ENCODE measurements at regions of chr12 and their contacts with region 1.

Region 1: GRCh38 chr12:131894313-131894860 is at the start of gene ULK1:
- DNase-seq: peak; percentile 96
- ATAC-seq: peak; percentile 86
- H3K4me3 Mint-ChIP-seq: peak within 1 kb of the TSS; percentile 78
- H3K27ac Mint-ChIP-seq: peak within 1 kb of the TSS; percentile 55
- H3K4me1 Mint-ChIP-seq: peaks cover 12% of the 10 kb centered on the region
- H3K27me3 Mint-ChIP-seq: no peaks in the 10 kb centered on the region
- total RNA-seq, gene ULK1: 12.9 to 14.4 TPM

Region 2: GRCh38 chr12:131121705-131122405 is 772.5 kb before region 1 on chr12:
- CTCF ChIA-PET with region 1: no interaction called
- POLR2A ChIA-PET with region 1: no interaction called
- intact Hi-C with region 1: no loop called
- DNase-seq: no peak
- ATAC-seq: no peak
- H3K4me3 Mint-ChIP-seq: no peak overlapping the region
- H3K27ac Mint-ChIP-seq: no peak overlapping the region
- H3K4me1 Mint-ChIP-seq: no peaks in the 10 kb centered on the region
- H3K27me3 Mint-ChIP-seq: no peaks in the 10 kb centered on the region

Region 3: GRCh38 chr12:131684015-131684725 is 210.2 kb before region 1 on chr12:
- CTCF ChIA-PET with region 1: no interaction called
- POLR2A ChIA-PET with region 1: no interaction called
- intact Hi-C with region 1: loop called in 1 of 2 experiments (anchors 1 kb)
- DNase-seq: peak; percentile 25
- ATAC-seq: no peak
- H3K4me3 Mint-ChIP-seq: no peak overlapping the region
- H3K27ac Mint-ChIP-seq: no peak overlapping the region
- H3K4me1 Mint-ChIP-seq: peaks cover 14% of the 10 kb centered on the region
- H3K27me3 Mint-ChIP-seq: peaks cover 5% of the 10 kb centered on the region

Region 4: DNA sequence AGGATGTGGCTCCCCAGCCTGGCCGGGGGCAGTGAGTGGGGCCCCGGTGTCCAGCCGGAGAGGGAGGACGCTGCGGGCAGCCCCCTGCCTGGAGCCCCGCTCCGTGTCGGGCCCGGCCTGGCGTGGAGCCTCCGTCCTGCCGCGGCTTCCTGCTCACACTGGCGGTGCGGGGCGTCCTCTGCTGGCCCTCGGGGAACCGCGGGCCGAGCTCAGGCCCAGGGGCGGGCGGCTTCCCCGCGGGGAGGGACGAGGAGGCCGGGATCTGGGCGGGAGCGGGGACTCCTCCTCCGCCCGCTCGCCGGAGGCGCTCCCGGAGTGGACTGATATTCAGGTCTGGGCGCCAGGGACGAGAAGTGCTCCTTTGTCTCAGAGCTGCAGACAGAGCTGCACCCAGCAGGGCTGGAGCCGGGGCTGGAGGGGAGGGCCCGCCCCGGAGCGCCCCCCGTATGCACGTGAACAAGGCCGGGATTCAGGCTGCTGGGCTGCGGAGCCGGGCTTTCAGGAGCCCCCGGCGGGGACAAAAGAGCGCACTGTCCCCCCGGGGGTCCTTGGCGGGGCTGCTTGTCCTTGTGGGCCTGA is 64.0 kb before region 1 on chr12:
- CTCF ChIA-PET with region 1: no interaction called
- POLR2A ChIA-PET with region 1: no interaction called
- intact Hi-C with region 1: loop called in 1 of 2 experiments (anchors 2 kb)
- DNase-seq: peak; percentile 69
- ATAC-seq: peak; percentile 63
- H3K4me3 Mint-ChIP-seq: peak overlapping the region; percentile 12
- H3K27ac Mint-ChIP-seq: no peak overlapping the region
- H3K4me1 Mint-ChIP-seq: peaks cover 11% of the 10 kb centered on the region
- H3K27me3 Mint-ChIP-seq: peaks cover 39% of the 10 kb centered on the region

Region 5: GRCh38 chr12:131912518-131913294 is 18.3 kb after region 1 on chr12:
- CTCF ChIA-PET with region 1: no interaction called
- POLR2A ChIA-PET with region 1: no interaction called
- intact Hi-C with region 1: no loop called
- DNase-seq: no peak
- ATAC-seq: no peak
- H3K4me3 Mint-ChIP-seq: no peak overlapping the region
- H3K27ac Mint-ChIP-seq: no peak overlapping the region
- H3K4me1 Mint-ChIP-seq: no peaks in the 10 kb centered on the region
- H3K27me3 Mint-ChIP-seq: no peaks in the 10 kb centered on the region

Region 6: DNA sequence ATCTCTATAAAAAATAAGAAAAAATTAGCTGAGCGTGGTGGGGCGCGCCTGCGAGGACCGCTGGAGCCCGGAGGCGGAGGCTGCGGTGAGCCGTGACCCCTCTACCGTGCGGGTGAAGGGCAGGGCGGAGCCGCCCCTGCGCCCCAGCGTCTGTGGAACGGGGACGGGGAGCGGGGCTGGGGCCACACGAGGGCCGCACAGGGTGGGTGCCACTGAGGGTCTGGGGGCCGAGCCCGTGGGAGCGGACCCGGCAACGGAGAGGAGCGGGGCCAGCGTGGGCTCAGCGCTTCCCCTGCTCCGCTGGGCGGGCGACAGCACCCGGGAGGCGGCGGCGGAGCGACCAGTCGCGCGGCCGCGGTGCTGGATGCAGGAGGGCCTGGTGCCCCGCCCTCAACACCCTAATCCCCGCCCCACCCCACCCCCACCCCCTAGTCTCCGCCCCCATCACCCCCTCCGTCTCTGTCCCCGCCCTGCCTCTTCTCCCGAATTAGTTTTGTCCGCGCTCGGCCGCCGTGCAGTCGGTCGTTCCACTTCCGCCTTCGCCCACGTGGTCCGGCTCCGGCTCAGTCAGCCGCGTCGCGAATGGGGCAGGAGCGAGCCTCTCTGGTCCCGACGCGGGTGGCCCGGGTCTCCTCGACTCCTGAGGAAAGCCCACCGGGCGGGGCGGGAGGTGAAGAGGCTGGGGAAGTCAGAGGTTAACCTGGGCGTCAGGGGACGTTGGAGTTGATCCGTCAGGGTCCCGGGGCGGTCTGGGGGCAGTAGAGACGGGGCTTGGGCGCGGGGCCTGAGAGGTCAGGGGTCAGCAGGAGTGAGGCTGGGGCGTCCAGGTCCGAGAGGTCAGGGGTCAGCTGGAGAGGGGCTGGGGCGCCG is 34.6 kb after region 1 on chr12 and contains the start of gene PUS1:
- CTCF ChIA-PET with region 1: no interaction called
- POLR2A ChIA-PET with region 1: no interaction called
- intact Hi-C with region 1: loop called (anchors 1 kb)
- DNase-seq: peak; percentile 97
- ATAC-seq: peak; percentile 89
- H3K4me3 Mint-ChIP-seq: peak within 1 kb of the TSS; percentile 97
- H3K27ac Mint-ChIP-seq: peak within 1 kb of the TSS; percentile 85
- H3K4me1 Mint-ChIP-seq: peaks cover 25% of the 10 kb centered on the region
- H3K27me3 Mint-ChIP-seq: no peaks in the 10 kb centered on the region
- total RNA-seq, gene PUS1: 37.8 to 56.5 TPM

Region 7: DNA sequence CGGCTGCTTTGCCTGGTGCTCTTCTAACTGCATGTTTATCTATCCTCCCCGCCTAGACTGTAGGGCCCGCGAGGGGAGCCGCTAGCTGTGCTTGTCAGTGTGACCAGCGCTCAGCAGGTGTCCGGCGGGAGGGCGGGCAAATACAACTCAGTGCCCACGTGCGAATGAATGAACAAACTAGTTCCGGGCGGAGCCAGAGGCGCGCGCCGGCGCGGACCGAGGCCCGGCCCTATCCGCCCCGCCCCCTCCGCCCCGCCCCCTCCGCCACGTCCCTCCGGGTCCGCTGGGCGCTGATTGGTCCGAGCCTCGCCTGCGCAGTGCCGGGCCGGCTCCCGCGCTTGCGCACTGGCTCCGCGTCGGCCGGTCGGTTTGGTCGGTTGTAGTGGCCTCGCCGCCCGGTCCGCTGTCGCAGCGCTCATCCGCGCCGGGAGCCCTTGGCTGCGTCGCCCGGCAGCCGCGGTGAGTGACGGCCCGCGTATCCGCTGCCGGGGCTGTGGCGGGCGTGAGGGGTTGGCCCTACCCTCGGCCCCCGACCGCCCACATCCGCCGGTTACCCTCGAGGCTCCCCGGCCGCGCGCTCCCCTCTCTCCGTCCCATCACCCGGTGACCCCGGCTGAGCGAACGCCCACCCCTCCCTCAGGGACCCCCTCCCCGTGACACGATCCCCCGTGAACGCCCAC is 189.7 kb after region 1 on chr12:
- CTCF ChIA-PET with region 1: no interaction called
- POLR2A ChIA-PET with region 1: no interaction called
- intact Hi-C with region 1: loop called in 1 of 2 experiments (anchors 1 kb)
- DNase-seq: peak; percentile 94
- ATAC-seq: peak; percentile 95
- H3K4me3 Mint-ChIP-seq: peak overlapping the region; percentile 86
- H3K27ac Mint-ChIP-seq: peak overlapping the region; percentile 91
- H3K4me1 Mint-ChIP-seq: peaks cover 23% of the 10 kb centered on the region
- H3K27me3 Mint-ChIP-seq: no peaks in the 10 kb centered on the region

Region 8: GRCh38 chr12:132189378-132190011 is 295.1 kb after region 1 on chr12:
- CTCF ChIA-PET with region 1: no interaction called
- POLR2A ChIA-PET with region 1: no interaction called
- intact Hi-C with region 1: loop called in 1 of 2 experiments (anchors 1 kb)
- DNase-seq: peak; percentile 97
- ATAC-seq: peak; percentile 95
- H3K4me3 Mint-ChIP-seq: peak overlapping the region; percentile 78
- H3K27ac Mint-ChIP-seq: peak overlapping the region; percentile 79
- H3K4me1 Mint-ChIP-seq: peaks cover 28% of the 10 kb centered on the region
- H3K27me3 Mint-ChIP-seq: no peaks in the 10 kb centered on the region